Aorta (tissue), 5 donors: ENCODE measurements at regions of chr5 and their contacts with region 1.

Region 1: GRCh38 chr5:113513384-113514288 is at the start of gene YTHDC2:
- DNase-seq: peak; percentile 91 to 96
- ATAC-seq: peak; percentile 99
- H3K4me3 ChIP-seq: peak within 1 kb of the TSS; percentile 81 to 87
- H3K27ac ChIP-seq: peak within 1 kb of the TSS; percentile 89 to 94
- H3K4me1 ChIP-seq: peaks cover 2 to 8% of the 10 kb centered on the region in 2 donors
- H3K27me3 ChIP-seq: no peaks in the 10 kb centered on the region
- total RNA-seq, gene YTHDC2: 34.1 to 37.6 TPM

Region 2: GRCh38 chr5:112995764-112996618 is 517.6 kb before region 1 on chr5:
- intact Hi-C with region 1: loop called (anchors 10 kb)
- DNase-seq: peak; percentile 76 to 82
- ATAC-seq: peak; percentile 87
- H3K4me3 ChIP-seq: no peak overlapping the region
- H3K27ac ChIP-seq: no peak overlapping the region
- H3K4me1 ChIP-seq: no peaks in the 10 kb centered on the region
- H3K27me3 ChIP-seq: no peaks in the 10 kb centered on the region

Region 3: DNA sequence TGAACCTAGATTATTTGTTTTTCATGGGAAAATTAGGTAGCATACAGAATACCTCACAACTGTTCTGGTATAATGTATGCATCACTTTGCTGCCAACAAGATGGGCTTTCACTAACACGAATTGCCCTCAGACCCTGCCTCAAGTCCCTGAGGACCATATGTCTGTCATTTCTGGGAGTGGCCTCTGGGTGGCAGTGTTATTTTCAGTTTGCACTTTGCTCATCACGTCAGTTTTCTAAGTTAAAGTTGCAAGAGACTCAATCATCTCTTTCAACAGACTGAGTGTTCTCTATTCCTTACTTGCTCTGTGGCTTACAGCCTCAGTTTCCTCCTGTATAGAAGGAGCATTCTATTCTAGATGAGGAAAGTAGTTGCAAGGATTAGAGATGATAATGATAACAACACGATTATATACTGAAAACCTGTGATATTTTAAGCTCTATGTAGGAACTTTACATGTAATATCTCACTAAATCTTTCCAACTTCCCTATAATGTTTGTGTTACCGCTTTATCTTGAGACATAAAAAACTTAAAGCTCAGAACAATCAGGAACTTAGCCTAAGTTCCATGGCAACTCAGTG is 134.6 kb before region 1 on chr5:
- intact Hi-C with region 1: loop called in 1 of 2 experiments (anchors 5 kb)
- DNase-seq: peak in 1 of 2 donors; percentile 58
- ATAC-seq: no peak
- H3K4me3 ChIP-seq: no peak overlapping the region
- H3K27ac ChIP-seq: no peak overlapping the region
- H3K4me1 ChIP-seq: peaks cover 0 to 1% of the 10 kb centered on the region in 2 donors
- H3K27me3 ChIP-seq: no peaks in the 10 kb centered on the region